Dendritic cell treated with granulocyte-macrophage colony-stimulating factor and Interleukin-4, amounts not matched to agents 40 ng/mL and 50 ng/mL, for 4 days (primary cell): ENCODE measurements at regions of chr14 and their contacts with region 1.

Region 1: GRCh38 chr14:91363776-91364523 is 53.7 kb downstream of the CCDC88C start:
- H3K4me3 Mint-ChIP-seq: peak overlapping the region; percentile 42
- H3K27ac Mint-ChIP-seq: peak overlapping the region; percentile 62
- H3K4me1 Mint-ChIP-seq: peaks cover 82% of the 10 kb centered on the region
- H3K27me3 Mint-ChIP-seq: peaks cover 14% of the 10 kb centered on the region

Region 2: GRCh38 chr14:91323671-91324605 is 40.0 kb before region 1 on chr14:
- intact Hi-C with region 1: loop called (anchors 5 kb)
- H3K4me3 Mint-ChIP-seq: peak overlapping the region; percentile 71
- H3K27ac Mint-ChIP-seq: peak overlapping the region; percentile 77
- H3K4me1 Mint-ChIP-seq: peaks cover 34% of the 10 kb centered on the region
- H3K27me3 Mint-ChIP-seq: peaks cover 24% of the 10 kb centered on the region

Region 3: DNA sequence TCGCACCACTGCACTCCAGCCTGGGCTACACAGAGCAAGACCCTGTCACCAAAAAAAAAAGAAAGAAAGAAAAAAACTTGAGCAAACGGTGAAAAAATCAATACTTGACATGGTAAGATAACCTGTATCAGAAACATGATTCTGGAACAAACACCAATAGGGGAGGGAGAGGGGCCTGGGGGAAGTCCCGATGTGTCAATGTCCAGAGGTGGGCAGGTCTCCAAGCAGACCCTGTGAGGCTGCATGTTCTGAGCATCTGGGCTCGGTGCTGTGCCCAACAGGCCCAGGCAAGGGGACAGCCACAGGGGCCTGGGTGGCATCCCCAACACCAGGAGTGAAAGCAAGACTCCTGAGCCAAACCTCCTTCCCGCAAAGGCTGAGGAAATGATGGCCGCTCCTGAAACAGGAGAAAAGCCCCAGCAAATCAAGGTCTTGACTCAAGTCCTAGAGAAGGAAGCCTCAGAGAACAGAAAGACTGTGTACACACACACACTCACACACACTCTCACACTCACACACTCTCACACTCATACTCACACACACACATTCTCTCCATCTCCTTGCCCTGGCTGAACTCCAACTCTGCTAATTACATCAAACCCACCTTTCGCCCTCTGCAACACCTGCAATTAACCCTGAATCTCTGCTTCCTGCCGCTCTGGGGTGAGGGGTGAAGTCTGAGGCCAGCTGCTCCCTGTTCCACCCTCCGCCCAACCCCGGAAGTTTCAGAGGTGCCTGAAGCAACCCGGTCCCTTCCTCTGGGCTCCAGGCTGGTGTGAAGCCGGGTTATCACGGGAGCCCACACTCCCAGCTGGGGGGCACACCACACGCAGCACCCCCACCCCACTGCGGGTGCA is 33.2 kb after region 1 on chr14:
- intact Hi-C with region 1: loop called (anchors 5 kb)
- H3K4me3 Mint-ChIP-seq: no peak overlapping the region
- H3K27ac Mint-ChIP-seq: peak overlapping the region; percentile 78
- H3K4me1 Mint-ChIP-seq: peaks cover 82% of the 10 kb centered on the region
- H3K27me3 Mint-ChIP-seq: peaks cover 17% of the 10 kb centered on the region

Region 4: DNA sequence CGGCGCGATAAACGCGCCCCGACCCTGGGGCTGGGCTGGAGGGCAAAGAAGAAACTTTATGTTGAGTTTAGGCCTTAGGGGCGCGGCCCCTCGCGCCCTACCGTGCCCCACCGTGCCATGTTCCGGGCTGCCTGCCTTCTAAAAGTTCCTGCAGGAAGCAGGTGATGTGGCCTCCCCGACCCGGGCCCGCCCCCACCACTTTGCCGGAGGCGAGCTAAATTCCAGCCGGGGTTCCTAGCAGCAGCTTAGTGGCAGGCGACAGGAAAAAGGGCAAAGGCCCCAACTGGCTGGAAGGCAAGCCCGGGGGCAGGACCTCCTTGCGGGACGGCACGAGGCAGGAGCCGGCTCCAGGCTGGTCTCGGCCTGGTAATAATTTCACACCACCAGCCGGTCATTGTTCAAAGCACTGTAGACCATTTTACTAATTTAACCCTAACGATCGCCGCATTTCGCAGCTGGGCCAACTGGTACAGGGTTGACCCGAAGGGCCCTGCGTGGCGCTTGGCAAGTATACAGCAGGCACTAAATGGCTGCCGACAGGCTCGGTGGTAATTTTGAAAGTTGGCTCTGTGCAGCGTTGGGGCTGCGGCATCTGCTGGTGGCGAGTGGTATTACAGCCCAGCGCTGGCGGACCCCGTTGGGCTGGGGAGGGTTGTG is 54.6 kb after region 1 on chr14:
- intact Hi-C with region 1: loop called (anchors 5 kb)
- H3K4me3 Mint-ChIP-seq: peak overlapping the region; percentile 67
- H3K27ac Mint-ChIP-seq: peak overlapping the region; percentile 57
- H3K4me1 Mint-ChIP-seq: peaks cover 53% of the 10 kb centered on the region
- H3K27me3 Mint-ChIP-seq: peaks cover 16% of the 10 kb centered on the region